MCF 10A (cell line): ENCODE measurements at regions of chr13 and their contacts with region 1.

Region 1: DNA sequence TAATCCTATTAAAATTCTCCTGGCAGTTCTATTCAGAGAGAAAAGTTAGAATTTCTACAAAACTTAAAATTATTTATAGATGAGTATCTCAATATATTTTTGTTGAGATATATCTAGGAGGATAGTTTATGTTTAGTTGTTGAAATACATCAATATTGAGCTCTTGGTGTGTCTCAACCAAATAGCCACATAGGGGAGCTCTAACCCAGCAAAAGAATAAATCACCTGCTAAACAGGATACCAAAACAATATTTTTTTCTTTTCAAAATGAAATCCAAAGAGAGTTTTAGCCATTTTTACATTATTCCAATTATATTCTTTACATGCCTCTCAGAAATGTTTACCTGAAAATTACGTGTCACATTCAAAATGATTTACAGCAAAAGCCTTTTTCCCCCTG is 954.7 kb downstream of the SLITRK6 start:
- DNase-seq: peak; percentile 60
- H3K4me3 Mint-ChIP-seq: no peak overlapping the region
- H3K27ac Mint-ChIP-seq: no peak overlapping the region
- H3K4me1 Mint-ChIP-seq: no peaks in the 10 kb centered on the region
- H3K27me3 Mint-ChIP-seq: no peaks in the 10 kb centered on the region
- CTCF ChIP-seq: peak; percentile 53

Region 2: DNA sequence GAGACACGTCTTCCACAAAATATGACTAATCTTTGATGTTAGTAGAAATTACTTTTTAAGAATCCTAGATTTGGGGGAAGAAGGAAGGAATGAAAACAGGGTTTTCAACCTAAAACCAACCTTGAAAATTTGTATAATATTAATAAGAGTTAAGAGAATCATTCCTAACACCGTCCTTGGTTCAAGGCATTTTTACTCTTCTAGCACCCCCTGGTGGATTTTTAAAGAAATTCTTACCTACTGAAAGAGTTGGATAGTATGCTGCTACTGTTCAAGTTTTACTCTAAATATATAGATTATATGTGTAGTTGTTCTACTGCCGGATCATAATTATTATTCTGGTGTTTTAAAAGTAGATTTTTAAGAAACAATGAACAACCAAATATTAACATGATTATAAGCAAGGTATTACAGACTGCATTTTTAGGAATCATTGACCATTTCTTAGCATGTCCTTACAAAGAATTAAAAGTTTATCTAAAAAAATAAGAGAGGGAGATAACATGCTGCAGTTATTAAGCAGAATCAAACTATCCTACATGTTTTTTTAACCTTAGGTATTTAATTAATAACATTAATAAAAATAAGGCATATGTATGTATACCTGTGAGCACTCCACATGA is 962.2 kb after region 1 on chr13:
- CTCF ChIA-PET with region 1: interaction called, 4 read pairs
- POLR2A ChIA-PET with region 1: no interaction called
- intact Hi-C with region 1: loop called (anchors 5 kb)
- DNase-seq: peak; percentile 66
- H3K4me3 Mint-ChIP-seq: no peak overlapping the region
- H3K27ac Mint-ChIP-seq: no peak overlapping the region
- H3K4me1 Mint-ChIP-seq: no peaks in the 10 kb centered on the region
- H3K27me3 Mint-ChIP-seq: no peaks in the 10 kb centered on the region
- CTCF ChIP-seq: peak; percentile 57